GM10248 (cell line): ENCODE measurements at regions of chr9 and their contacts with region 1.

Region 1: GRCh38 chr9:105414947-105415661 is 32.7 kb upstream of the FSD1L start:
- DNase-seq: peak; percentile 66
- CTCF ChIP-seq: peak; percentile 69

Region 2: GRCh38 chr9:105157130-105157583 is 257.9 kb before region 1 on chr9:
- CTCF ChIA-PET with region 1: interaction called, 20 read pairs
- POLR2A ChIA-PET with region 1: no interaction called
- DNase-seq: peak; percentile 66
- CTCF ChIP-seq: peak; percentile 22

Region 3: DNA sequence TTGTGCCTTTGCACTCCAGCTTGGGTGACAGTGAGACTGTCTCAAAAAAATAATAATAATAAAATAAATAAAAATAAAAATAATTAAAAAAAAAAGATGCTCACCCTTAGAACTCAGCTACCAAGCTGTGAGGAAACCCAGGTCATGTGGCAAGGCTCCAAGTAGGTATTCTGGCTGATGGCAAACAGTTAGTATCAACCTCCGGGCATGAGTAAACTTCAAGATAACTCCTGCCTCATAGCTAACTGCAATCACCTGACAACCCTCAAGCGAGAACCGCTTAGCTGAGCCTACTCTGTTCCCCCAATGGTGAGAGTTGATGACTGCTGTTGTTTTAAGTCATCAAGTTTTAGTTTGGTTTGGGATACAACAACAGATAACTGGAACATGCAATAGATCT is 176.8 kb before region 1 on chr9:
- CTCF ChIA-PET with region 1: no interaction called
- POLR2A ChIA-PET with region 1: no interaction called
- DNase-seq: no peak
- CTCF ChIP-seq: no peak